ENCODE measurements at regions of chr5 and their contacts with region 1.

Region 1: GRCh38 chr5:134948911-134949310 is 18.8 kb upstream of the CATSPER3 start:
- DNase-seq: no peak
- ATAC-seq: no peak
- H3K4me3 Mint-ChIP-seq: no peak overlapping the region
- H3K27ac Mint-ChIP-seq: no peak overlapping the region
- H3K4me1 Mint-ChIP-seq: no peaks in the 10 kb centered on the region
- H3K27me3 Mint-ChIP-seq: no peaks in the 10 kb centered on the region

Region 2: GRCh38 chr5:134468602-134469400 is 480.1 kb before region 1 on chr5:
- CTCF ChIA-PET with region 1: no interaction called
- POLR2A ChIA-PET with region 1: no interaction called
- DNase-seq: no peak
- ATAC-seq: no peak
- H3K4me3 Mint-ChIP-seq: no peak overlapping the region
- H3K27ac Mint-ChIP-seq: no peak overlapping the region
- H3K4me1 Mint-ChIP-seq: peaks cover 21% of the 10 kb centered on the region
- H3K27me3 Mint-ChIP-seq: peaks cover 2% of the 10 kb centered on the region

Region 3: DNA sequence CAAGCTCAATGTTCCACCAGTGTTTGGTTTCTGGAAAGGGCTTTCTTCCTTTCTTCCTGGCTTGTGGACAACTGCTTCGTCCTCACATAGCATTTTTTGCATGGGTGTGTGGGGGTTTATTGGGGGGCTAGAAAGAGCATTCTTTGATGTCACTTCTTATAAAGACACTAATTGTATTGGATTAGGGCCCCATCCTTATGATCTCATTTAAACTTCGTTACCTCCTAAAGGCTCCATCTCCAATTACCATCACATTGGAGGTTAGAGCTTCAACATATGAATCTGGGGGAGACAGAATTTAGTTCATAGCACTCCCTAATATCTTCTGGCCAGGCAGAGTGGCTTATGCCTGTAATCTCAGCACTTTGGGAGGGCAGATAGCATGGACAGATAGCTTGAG is 456.2 kb after region 1 on chr5:
- CTCF ChIA-PET with region 1: no interaction called
- POLR2A ChIA-PET with region 1: interaction called, 11 read pairs
- DNase-seq: no peak
- ATAC-seq: no peak
- H3K4me3 Mint-ChIP-seq: no peak overlapping the region
- H3K27ac Mint-ChIP-seq: no peak overlapping the region
- H3K4me1 Mint-ChIP-seq: peaks cover 2% of the 10 kb centered on the region
- H3K27me3 Mint-ChIP-seq: peaks cover 30% of the 10 kb centered on the region